ENCODE measurements at regions of chr4 and their contacts with region 1.

Region 1: DNA sequence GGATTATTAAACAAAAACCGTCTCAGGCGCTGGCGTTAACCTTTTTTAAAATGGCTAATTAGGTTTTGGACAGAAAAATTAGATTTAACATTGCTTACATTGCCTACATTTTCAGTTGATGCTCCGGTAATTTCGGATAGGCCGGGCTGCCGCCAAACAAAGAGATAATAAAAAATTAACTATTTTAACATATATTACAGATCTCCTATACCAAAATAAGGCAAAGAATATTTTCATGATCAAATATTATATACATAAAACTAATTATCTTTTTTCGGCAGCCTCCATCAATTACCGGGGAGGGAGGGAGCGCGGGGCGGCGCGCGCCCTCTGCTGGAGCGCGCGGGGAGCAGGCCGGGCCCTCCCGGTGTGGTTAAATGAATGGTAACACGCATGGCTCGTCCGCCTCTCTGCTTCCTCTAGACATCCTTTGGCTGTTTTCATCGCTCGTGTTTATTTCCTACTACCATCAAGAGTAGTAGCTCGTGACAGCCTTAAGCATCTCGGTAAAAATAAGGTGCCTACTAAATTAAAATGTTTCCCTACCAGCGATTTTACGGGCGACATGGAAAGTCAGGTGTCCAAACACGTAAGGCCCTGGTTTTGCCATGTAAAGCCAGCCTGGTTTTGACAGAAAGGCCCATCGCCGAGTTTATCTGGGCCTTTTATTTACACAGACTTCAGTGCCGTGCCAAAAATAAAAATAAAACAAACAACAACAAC is 52.4 kb upstream of the TMEM33 start:
- DNase-seq: peak; percentile 82
- CTCF ChIP-seq: peak; percentile 90

Region 2: GRCh38 chr4:41692717-41693345 is 190.0 kb before region 1 on chr4:
- CTCF ChIA-PET with region 1: interaction called, 17 read pairs
- POLR2A ChIA-PET with region 1: no interaction called
- DNase-seq: peak; percentile 27
- CTCF ChIP-seq: peak; percentile 75